WTC11 (cell line): ENCODE measurements at regions of chr12 and their contacts with region 1.

Region 1: GRCh38 chr12:51217968-51218606 is at the start of gene POU6F1:
- DNase-seq: peak; percentile 74
- ATAC-seq: peak; percentile 75
- H3K4me3 Mint-ChIP-seq: peak within 1 kb of the TSS; percentile 70
- H3K27ac Mint-ChIP-seq: peak within 1 kb of the TSS; percentile 54
- H3K4me1 Mint-ChIP-seq: peaks cover 18% of the 10 kb centered on the region
- H3K27me3 Mint-ChIP-seq: no peaks in the 10 kb centered on the region
- CTCF ChIP-seq: peak; percentile 34; the same call in 1 of the 2 replicates
- total RNA-seq, gene POU6F1: 10.2 to 14.5 TPM (median 11.2 TPM) in 3 replicates

Region 2: GRCh38 chr12:51083126-51083833 is 134.8 kb before region 1 on chr12 and contains the start of gene CSRNP2:
- CTCF ChIA-PET with region 1: interaction called, 6 read pairs
- POLR2A ChIA-PET with region 1: interaction called, 24 read pairs
- DNase-seq: peak; percentile 98
- ATAC-seq: peak; percentile 97
- H3K4me3 Mint-ChIP-seq: peak within 1 kb of the TSS; percentile 99
- H3K27ac Mint-ChIP-seq: peak within 1 kb of the TSS; percentile 95
- H3K4me1 Mint-ChIP-seq: peaks cover 19% of the 10 kb centered on the region
- H3K27me3 Mint-ChIP-seq: no peaks in the 10 kb centered on the region
- CTCF ChIP-seq: no peak
- total RNA-seq, gene CSRNP2: 33.7 to 36.1 TPM (median 34.2 TPM) in 3 replicates

Region 3: DNA sequence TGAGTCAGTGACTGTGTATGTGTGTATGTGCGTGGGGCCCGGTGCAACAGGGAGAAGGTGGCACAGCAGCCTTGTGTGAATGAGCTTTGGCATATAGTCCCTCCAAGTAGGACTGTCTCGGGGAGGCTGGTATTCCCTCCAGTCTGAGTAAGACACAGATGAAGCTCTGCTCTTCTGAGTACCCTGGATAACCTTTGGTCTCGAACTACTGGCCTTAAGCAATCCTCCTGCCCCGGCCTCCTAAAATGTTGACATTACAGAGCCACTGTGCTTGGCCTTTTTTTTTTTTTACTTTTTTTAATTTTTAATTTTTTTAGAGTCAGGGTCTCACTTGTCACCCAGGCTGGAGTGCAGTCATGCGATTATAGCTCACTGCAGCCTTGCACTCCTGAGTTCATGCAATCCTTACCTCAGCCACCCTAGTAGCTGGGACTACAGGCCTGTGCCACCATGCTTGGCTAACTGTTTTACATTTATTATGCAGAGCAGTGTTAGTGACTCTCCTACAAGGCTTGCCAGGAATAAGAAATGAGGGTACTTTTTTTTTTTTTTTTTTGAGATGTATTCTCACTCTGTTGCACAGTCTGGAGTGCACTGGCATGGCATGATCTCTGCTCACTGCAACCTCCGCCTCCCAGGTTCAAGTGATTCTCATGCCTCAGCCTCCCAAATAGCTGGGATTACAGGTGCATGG is 11.2 kb after region 1 on chr12:
- CTCF ChIA-PET with region 1: interaction called, 14 read pairs
- POLR2A ChIA-PET with region 1: no interaction called
- DNase-seq: no peak
- ATAC-seq: no peak
- H3K4me3 Mint-ChIP-seq: no peak overlapping the region
- H3K27ac Mint-ChIP-seq: no peak overlapping the region
- H3K4me1 Mint-ChIP-seq: peaks cover 6% of the 10 kb centered on the region; the same call in 1 of the 2 replicates
- H3K27me3 Mint-ChIP-seq: no peaks in the 10 kb centered on the region
- CTCF ChIP-seq: no peak

Region 4: DNA sequence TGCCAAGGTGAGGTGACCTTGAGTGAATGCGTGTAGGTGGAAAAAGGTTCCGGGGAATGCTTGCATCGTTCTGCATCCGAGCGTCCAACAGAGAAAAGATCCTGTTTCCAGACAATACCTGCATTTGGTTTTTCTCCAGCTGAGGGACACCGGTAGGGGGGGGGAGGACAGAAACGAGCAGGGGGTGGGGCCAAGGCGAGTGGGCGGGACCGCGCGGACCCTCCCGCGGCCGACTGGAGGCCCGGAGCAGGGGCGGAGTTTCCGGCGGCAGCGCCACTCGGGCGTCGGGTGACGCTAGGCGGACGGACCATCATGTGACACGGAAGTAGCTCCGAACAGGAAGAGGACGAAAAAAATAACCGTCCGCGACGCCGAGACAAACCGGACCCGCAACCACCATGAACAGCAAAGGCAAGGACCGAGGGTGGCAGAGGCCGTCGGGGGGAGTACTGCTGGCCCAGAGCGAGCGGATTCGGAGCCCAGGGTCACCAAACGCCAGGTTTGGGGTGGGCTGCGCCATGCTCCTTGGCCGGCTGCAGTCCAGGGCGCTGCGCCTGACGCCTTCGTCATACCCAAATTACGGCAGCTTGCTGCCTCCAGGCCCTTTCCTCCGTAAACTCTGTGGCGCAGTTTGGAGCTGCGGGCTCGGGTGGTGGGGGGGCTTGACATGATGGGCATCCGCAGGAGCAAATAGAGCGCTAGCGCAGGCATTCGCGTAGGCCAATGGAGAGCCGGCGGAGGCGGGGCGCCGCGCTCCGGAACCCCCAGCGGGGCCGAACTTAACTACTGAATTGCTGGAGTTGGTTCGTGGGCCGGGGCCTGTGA is 20.6 kb after region 1 on chr12 and contains the start of gene DAZAP2:
- CTCF ChIA-PET with region 1: interaction called, 23 read pairs
- POLR2A ChIA-PET with region 1: interaction called, 19 read pairs
- DNase-seq: peak; percentile 97
- ATAC-seq: peak; percentile 94
- H3K4me3 Mint-ChIP-seq: peak within 1 kb of the TSS; percentile 95
- H3K27ac Mint-ChIP-seq: peak within 1 kb of the TSS; percentile 99
- H3K4me1 Mint-ChIP-seq: peaks cover 10% of the 10 kb centered on the region
- H3K27me3 Mint-ChIP-seq: no peaks in the 10 kb centered on the region
- CTCF ChIP-seq: no peak
- total RNA-seq, gene DAZAP2: 30.4 to 35.8 TPM (median 33.0 TPM) in 3 replicates